Right lobe of liver (tissue), 6 donors: ENCODE measurements at regions of chr3 and their contacts with region 1.

Region 1: GRCh38 chr3:42443819-42444436 is 33.5 kb upstream of the LYZL4 start:
- DNase-seq: peak; percentile 82 to 88 (median 86)
- ATAC-seq: peak; percentile 98 to 99 (median 98)
- H3K4me3 ChIP-seq: no peak overlapping the region
- H3K27ac ChIP-seq: no peak overlapping the region
- H3K4me1 ChIP-seq: no peaks in the 10 kb centered on the region
- H3K27me3 ChIP-seq: no peaks in the 10 kb centered on the region
- CTCF ChIP-seq: peak; percentile 91 to 99 (median 99)
- POLR2A ChIP-seq: no peak

Region 2: DNA sequence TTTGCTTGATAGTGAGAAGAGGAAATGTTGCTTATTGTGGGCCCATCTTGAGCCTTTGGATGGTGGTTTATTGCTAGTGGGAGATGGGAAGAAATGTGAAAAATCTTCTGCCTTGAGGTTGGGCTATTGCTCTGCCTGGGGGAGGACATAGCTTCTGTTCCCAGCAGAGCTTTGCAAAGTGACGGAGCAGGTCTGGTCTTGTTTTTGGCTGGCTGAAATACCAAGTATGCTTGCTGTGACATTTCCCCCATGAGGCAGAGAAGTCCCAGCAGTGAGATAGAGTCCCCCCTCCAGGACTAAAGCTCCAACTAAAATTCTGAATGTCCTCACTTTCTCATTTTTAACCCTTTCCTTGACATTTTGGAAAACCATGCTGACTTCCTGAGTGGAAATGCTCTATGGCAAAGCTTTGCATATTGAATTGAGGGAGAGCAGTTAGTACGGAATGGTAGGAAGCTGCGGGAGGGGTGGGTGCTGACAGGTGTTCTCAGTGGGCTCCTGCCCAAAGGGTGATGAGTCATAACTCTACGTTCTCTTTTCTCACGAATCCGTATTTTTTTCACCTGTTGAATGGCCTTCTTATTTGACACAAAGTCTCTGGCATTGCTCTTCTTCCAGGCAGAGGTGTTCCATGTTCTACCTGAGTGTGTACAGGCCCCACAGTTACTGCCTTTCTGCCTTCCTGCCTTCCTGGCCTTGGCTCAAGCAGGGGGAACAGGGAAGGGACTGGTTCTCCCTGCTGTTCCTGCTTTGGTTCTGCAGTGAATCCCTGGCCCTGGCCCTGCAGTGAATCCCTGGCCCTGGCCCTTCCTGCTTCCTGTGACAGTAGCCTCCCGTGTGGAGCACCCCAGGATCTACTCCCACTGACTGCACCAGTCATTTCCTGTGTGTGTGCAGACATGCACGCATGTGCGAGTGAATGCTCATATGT is 321.0 kb before region 1 on chr3:
- intact Hi-C with region 1: no loop called
- DNase-seq: no peak
- ATAC-seq: peak; percentile 36 to 64 (median 54)
- H3K4me3 ChIP-seq: no peak overlapping the region
- H3K27ac ChIP-seq: no peak overlapping the region
- H3K4me1 ChIP-seq: peaks cover 0 to under 1% (median 0%) of the 10 kb centered on the region in 4 donors
- H3K27me3 ChIP-seq: no peaks in the 10 kb centered on the region
- CTCF ChIP-seq: no peak
- POLR2A ChIP-seq: no peak

Region 3: GRCh38 chr3:42229942-42230688 is 213.8 kb before region 1 on chr3:
- intact Hi-C with region 1: loop called in 1 of 2 experiments (anchors 5 kb)
- DNase-seq: no peak
- ATAC-seq: peak; percentile 63 to 73 (median 70)
- H3K4me3 ChIP-seq: no peak overlapping the region
- H3K27ac ChIP-seq: no peak overlapping the region
- H3K4me1 ChIP-seq: peaks cover 0 to 27% (median 4%) of the 10 kb centered on the region in 4 donors
- H3K27me3 ChIP-seq: no peaks in the 10 kb centered on the region
- CTCF ChIP-seq: peak; percentile 55 to 60 (median 58)
- POLR2A ChIP-seq: no peak

Region 4: DNA sequence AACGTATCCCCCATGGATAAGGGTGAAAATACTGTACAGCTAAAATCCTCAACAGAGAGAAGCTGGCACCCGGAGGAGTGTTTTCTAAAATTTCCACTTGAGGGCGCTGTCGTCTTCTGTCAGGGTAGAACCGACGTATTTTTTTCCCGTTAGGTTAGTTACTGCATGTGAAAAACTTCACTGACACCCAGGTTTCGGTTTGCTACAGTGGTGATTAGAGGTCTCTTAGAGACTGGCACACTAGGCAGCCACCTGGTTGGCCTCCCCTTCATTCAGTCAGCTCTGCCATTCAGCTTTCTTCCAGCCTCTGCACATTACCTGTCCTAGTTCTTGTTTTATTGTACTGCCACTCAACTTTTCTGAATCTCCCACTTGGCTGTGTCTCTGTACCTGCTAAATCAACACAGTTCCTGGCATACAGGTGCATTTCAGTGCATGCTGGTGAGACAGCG is 196.3 kb before region 1 on chr3:
- intact Hi-C with region 1: loop called in 1 of 2 experiments (anchors 5 kb)
- DNase-seq: peak in 1 of 3 donors; percentile 62
- ATAC-seq: peak; percentile 83 to 97 (median 90)
- H3K4me3 ChIP-seq: no peak overlapping the region
- H3K27ac ChIP-seq: no peak overlapping the region
- H3K4me1 ChIP-seq: no peaks in the 10 kb centered on the region
- H3K27me3 ChIP-seq: no peaks in the 10 kb centered on the region
- CTCF ChIP-seq: peak; percentile 63 to 79 (median 71)
- POLR2A ChIP-seq: no peak

Region 5: GRCh38 chr3:42264399-42265058 is 179.4 kb before region 1 on chr3:
- intact Hi-C with region 1: loop called in 1 of 2 experiments (anchors 10 kb)
- DNase-seq: peak in 2 of 3 donors; percentile 36 to 55
- ATAC-seq: peak in 3 of 4 donors; percentile 33 to 75 (median 40)
- H3K4me3 ChIP-seq: no peak overlapping the region
- H3K27ac ChIP-seq: no peak overlapping the region
- H3K4me1 ChIP-seq: no peaks in the 10 kb centered on the region
- H3K27me3 ChIP-seq: peaks cover 12 to 15% of the 10 kb centered on the region in 2 donors
- CTCF ChIP-seq: no peak
- POLR2A ChIP-seq: no peak